HepG2 (cell line): ENCODE measurements at regions of chr7 and their contacts with region 1.

Region 1: GRCh38 chr7:48875045-48875916 is 49.1 kb upstream of the CDC14C start:
- DNase-seq: peak; percentile 15
- ATAC-seq: peak; percentile 99
- H3K4me3 ChIP-seq: no peak overlapping the region
- H3K27ac ChIP-seq: no peak overlapping the region
- H3K4me1 ChIP-seq: no peaks in the 10 kb centered on the region
- H3K27me3 ChIP-seq: no peaks in the 10 kb centered on the region
- CTCF ChIP-seq: peak; percentile 73
- EP300 ChIP-seq: no peak
- POLR2A ChIP-seq: no peak
- RAD21 ChIP-seq: peak; percentile 54; the same call in 1 of the 2 replicates

Region 2: GRCh38 chr7:48337012-48337621 is 538.2 kb before region 1 on chr7:
- CTCF ChIA-PET with region 1: no interaction called
- POLR2A ChIA-PET with region 1: no interaction called
- in situ Hi-C with region 1: no loop called
- intact Hi-C with region 1: loop called (anchors 1 kb)
- DNase-seq: peak; percentile 10
- ATAC-seq: peak; percentile 86
- H3K4me3 ChIP-seq: no peak overlapping the region
- H3K27ac ChIP-seq: no peak overlapping the region
- H3K4me1 ChIP-seq: no peaks in the 10 kb centered on the region
- H3K27me3 ChIP-seq: no peaks in the 10 kb centered on the region
- CTCF ChIP-seq: peak; percentile 48
- EP300 ChIP-seq: no peak
- POLR2A ChIP-seq: no peak
- RAD21 ChIP-seq: no peak